ENCODE measurements at regions of chr11 and their contacts with region 1.

Region 1: DNA sequence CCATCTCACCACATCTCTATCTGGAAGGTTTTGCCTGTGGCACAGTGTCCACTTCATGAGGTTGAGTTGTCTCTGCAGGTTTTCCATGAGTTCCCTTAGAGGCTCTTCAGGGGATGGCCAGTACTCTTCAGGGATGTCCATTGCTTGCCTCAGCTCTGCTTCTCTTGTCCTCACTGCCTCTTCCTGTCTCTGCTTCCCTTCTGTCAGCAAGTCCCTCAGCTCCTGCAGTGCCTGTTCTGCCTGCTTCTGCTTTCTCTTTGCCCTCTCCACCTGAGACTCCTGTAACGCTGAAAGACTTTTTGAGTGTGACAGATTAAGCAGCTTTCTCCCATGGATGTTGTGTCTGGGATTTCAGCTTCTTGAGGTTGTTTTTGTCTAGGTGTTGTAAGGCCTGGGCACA is 38.2 kb upstream of the MRPL17 start:
- DNase-seq: no peak
- ATAC-seq: no peak
- H3K4me3 ChIP-seq: no peak overlapping the region
- H3K27ac ChIP-seq: no peak overlapping the region
- H3K4me1 ChIP-seq: no peaks in the 10 kb centered on the region
- CTCF ChIP-seq: no peak
- EP300 ChIP-seq: no peak
- POLR2A ChIP-seq: no peak
- RAD21 ChIP-seq: no peak

Region 2: DNA sequence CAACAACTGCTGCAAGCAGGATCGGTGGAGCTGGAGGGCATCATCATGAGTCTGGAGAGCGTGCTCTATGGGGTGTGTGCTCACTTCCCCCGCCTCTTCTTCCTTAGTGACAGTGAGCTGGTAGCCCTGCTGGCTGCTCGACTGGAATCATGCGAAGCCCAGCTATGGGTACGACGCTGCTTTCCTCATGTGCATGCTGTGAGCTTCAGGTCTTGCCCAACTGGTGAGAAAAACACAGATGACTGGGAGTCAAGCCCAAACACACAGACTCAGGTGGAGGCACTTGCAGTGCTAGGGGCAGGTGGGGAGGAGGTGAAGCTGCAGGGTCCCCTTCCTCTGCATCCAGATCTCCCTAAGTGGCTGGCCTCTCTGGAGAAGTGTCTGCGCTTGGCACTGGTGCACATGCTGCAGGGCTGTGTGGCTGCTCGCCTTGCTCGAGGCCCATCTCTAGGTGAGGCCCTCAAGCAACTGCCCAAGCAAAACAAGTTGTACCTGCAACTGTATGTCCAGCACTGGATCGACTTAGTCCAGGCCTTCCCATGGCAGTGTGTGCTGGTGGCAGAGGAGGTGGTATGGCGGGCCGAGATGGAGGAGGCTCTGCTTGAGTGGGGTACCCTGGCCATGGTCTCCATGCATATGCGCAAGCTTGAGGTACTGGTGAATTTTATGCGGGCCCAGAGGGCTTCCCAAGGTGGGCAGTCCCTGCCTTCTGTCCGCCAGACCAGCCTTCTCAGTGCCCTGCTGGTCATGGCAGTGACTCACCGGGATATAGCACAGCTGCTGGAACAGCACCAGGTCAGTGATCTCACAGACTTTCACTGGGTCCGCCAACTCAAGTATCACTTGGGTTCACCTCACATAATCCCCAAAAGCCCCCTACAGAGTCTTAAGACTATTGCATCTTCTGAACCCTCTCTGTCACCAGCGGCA is 176.2 kb before region 1 on chr11:
- CTCF ChIA-PET with region 1: no interaction called
- POLR2A ChIA-PET with region 1: no interaction called
- DNase-seq: no peak
- ATAC-seq: peak in 1 of 2 experiments; percentile 21; a peak in 2 of 6 replicates
- H3K4me3 ChIP-seq: no peak overlapping the region
- H3K27ac ChIP-seq: no peak overlapping the region
- H3K4me1 ChIP-seq: no peaks in the 10 kb centered on the region
- CTCF ChIP-seq: no peak
- EP300 ChIP-seq: no peak
- POLR2A ChIP-seq: no peak
- RAD21 ChIP-seq: no peak

Region 3: GRCh38 chr11:6737872-6738466 is 16.6 kb after region 1 on chr11:
- CTCF ChIA-PET with region 1: interaction called, 17 read pairs
- POLR2A ChIA-PET with region 1: no interaction called
- DNase-seq: peak; percentile 36 to 45
- ATAC-seq: peak; percentile 84 to 93
- H3K4me3 ChIP-seq: no peak overlapping the region
- H3K27ac ChIP-seq: no peak overlapping the region
- H3K4me1 ChIP-seq: no peaks in the 10 kb centered on the region
- CTCF ChIP-seq: peak; percentile 61
- EP300 ChIP-seq: no peak
- POLR2A ChIP-seq: no peak
- RAD21 ChIP-seq: peak; percentile 29 to 39; a peak in 3 of 5 replicates

Measured in A549 (cell line).